HEK293 (cell line): ENCODE measurements at regions of chr20 and their contacts with region 1.

Region 1: DNA sequence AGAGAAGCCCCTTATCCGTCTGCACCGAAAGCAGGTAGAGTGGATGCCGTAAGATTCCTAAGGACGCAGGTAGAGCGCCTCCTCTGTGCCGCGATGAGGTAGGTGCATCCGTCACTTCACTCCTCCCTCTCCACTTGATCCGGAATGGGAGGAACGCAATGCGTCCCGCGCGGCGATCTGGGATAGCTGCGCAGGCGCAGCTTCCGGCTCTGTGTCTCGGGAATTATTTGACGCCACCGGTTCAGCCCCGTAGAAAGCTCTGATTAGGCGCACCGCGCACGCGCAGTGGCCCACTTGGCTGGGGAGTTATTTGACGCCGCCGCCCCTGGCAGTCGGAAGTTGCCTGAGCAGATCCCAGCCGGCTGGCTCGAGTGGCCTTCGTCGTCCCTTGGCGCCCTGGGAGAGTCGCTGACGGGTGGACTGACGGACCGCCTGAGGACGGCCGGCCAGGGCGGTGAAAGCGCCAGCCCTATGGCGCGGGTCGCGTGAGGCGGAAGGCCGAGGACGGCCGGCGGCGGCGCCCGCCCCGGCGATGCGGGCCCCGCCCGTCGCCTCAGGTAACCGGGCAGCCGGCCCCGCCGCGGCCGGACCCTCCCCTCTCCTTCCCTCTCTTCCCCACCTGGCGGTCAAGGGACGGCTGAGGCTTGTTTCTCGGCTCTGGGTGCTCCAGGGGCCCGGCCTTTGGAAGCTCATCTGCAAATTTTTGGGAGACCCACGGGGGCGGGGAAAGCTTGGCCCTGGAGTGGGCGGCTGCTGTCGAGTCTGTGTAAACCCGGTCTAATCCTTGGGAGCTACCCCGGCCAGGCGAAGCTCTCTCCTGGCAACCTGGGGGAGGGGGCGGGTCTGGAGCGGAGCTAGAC is at the start of gene RALGAPB:
- H3K4me3 ChIP-seq: peak within 1 kb of the TSS; percentile 80
- H3K27ac ChIP-seq: peak within 1 kb of the TSS; percentile 75
- H3K4me1 ChIP-seq: peaks cover 3% of the 10 kb centered on the region; the same call in 1 of the 2 replicates
- CTCF ChIP-seq: peak; percentile 97

Region 2: DNA sequence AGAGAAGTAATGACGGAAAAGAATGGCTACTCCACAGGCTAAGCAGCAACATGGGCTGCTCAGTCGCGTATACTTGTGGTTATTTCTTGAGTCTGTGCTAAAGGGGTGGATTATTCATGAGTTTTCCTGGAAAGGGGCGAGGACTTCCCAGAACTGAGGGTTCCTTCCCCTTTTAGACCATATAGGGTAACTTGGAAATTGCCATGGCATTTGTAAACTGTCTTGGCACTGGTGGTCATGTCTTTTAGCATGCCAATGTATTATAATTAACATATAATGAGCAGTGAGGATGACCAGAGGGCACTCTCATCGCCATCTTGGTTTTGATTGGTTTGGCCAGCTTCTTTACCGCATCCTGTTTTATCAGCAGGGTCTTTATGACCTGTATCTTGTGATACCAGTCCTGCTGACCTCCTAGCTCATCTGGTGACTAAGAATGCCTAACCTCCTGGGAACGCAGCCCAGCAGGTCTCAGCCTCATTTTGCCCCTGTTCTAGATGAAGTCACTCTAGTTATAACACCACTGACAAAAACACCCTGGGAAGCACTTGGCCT is 115.0 kb before region 1 on chr20:
- CTCF ChIA-PET with region 1: no interaction called
- POLR2A ChIA-PET with region 1: no interaction called
- H3K4me3 ChIP-seq: no peak overlapping the region
- H3K27ac ChIP-seq: no peak overlapping the region
- H3K4me1 ChIP-seq: no peaks in the 10 kb centered on the region
- CTCF ChIP-seq: no peak

Region 3: GRCh38 chr20:38446441-38447209 is 26.1 kb before region 1 on chr20:
- CTCF ChIA-PET with region 1: interaction called, 44 read pairs
- POLR2A ChIA-PET with region 1: interaction called, 44 read pairs
- H3K4me3 ChIP-seq: peak overlapping the region; percentile 89
- H3K27ac ChIP-seq: peak overlapping the region; percentile 76
- H3K4me1 ChIP-seq: peaks cover 3% of the 10 kb centered on the region
- CTCF ChIP-seq: peak; percentile 99

Region 4: GRCh38 chr20:38485041-38485440 is 12.3 kb after region 1 on chr20:
- CTCF ChIA-PET with region 1: interaction called, 6 read pairs
- POLR2A ChIA-PET with region 1: interaction called, 14 read pairs
- H3K4me3 ChIP-seq: no peak overlapping the region
- H3K27ac ChIP-seq: no peak overlapping the region
- H3K4me1 ChIP-seq: no peaks in the 10 kb centered on the region
- CTCF ChIP-seq: no peak